ENCODE measurements at regions of chr4 and their contacts with region 1.

Region 1: GRCh38 chr4:105520817-105521790 is 31.3 kb upstream of the ARHGEF38 start:
- DNase-seq: peak in 2 of 9 donors; percentile 6 to 20
- ATAC-seq: no peak
- H3K4me3 ChIP-seq: no peak overlapping the region
- H3K4me3 Mint-ChIP-seq: no peak overlapping the region
- H3K27ac ChIP-seq: no peak overlapping the region
- H3K27ac Mint-ChIP-seq: no peak overlapping the region
- H3K4me1 ChIP-seq: no peaks in the 10 kb centered on the region
- H3K4me1 Mint-ChIP-seq: peaks cover 0 to 1% (median 0%) of the 10 kb centered on the region in 7 donors
- H3K27me3 ChIP-seq: no peaks in the 10 kb centered on the region
- H3K27me3 Mint-ChIP-seq: peaks cover 6 to 24% (median 12%) of the 10 kb centered on the region in 5 donors

Region 2: DNA sequence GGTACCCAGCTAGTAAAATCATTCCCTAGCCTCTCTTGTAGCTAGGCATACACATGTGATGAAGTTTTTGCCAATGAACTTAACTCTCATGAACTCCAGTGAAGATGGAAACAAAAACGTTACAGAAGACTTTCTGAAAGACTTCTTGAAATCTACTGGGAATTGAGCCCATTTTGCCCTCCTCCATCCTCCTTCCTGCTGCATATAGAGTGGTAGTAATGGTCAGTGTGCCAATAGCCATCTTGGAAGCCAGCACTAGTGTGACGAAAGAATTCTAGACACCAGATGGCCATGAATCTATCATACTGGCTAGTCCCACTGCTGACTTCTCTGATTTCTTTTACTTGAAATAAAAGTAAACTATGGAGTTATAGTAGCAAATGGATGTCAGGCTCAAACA is 16.4 kb before region 1 on chr4:
- CTCF ChIA-PET with region 1: no interaction called
- POLR2A ChIA-PET with region 1: no interaction called
- intact Hi-C with region 1: no loop called
- DNase-seq: no peak
- ATAC-seq: no peak
- H3K4me3 ChIP-seq: no peak overlapping the region
- H3K4me3 Mint-ChIP-seq: no peak overlapping the region
- H3K27ac ChIP-seq: no peak overlapping the region
- H3K27ac Mint-ChIP-seq: no peak overlapping the region
- H3K4me1 ChIP-seq: no peaks in the 10 kb centered on the region
- H3K4me1 Mint-ChIP-seq: no peaks in the 10 kb centered on the region
- H3K27me3 ChIP-seq: no peaks in the 10 kb centered on the region
- H3K27me3 Mint-ChIP-seq: peaks cover 0 to 7% (median 2%) of the 10 kb centered on the region in 5 donors

Region 3: GRCh38 chr4:105715692-105716278 is 194.7 kb after region 1 on chr4:
- CTCF ChIA-PET with region 1: interaction called, 3 read pairs
- POLR2A ChIA-PET with region 1: no interaction called
- intact Hi-C with region 1: loop called (anchors 1 kb)
- DNase-seq: peak in 5 of 9 donors; percentile 3 to 27 (median 23)
- ATAC-seq: peak; percentile 47
- H3K4me3 ChIP-seq: no peak overlapping the region
- H3K4me3 Mint-ChIP-seq: peak overlapping the region in 1 of 10 donors; percentile 10
- H3K27ac ChIP-seq: no peak overlapping the region
- H3K27ac Mint-ChIP-seq: no peak overlapping the region
- H3K4me1 ChIP-seq: no peaks in the 10 kb centered on the region
- H3K4me1 Mint-ChIP-seq: peaks cover 0 to 12% (median 4%) of the 10 kb centered on the region in 7 donors
- H3K27me3 ChIP-seq: no peaks in the 10 kb centered on the region
- H3K27me3 Mint-ChIP-seq: peaks cover 0 to 3% (median 0%) of the 10 kb centered on the region in 5 donors

Measured in naive thymus-derived CD4-positive, alpha-beta T cell (primary cell).